CD4-positive, alpha-beta memory T cell (primary cell): ENCODE measurements at regions of chr6 and their contacts with region 1.

Region 1: GRCh38 chr6:109095027-109095834 is at the start of gene CEP57L1:
- DNase-seq: peak; percentile 94 to 97 (median 95)
- H3K4me3 ChIP-seq: peak within 1 kb of the TSS; percentile 74 to 80
- H3K4me3 Mint-ChIP-seq: peak within 1 kb of the TSS; percentile 90 to 97 (median 95)
- H3K27ac ChIP-seq: peak within 1 kb of the TSS; percentile 97
- H3K27ac Mint-ChIP-seq: peak within 1 kb of the TSS; percentile 97 to 100 (median 99)
- H3K4me1 ChIP-seq: peaks cover 44% of the 10 kb centered on the region
- H3K4me1 Mint-ChIP-seq: peaks cover 36 to 60% (median 44%) of the 10 kb centered on the region in 4 donors
- H3K27me3 ChIP-seq: no peaks in the 10 kb centered on the region
- H3K27me3 Mint-ChIP-seq: no peaks in the 10 kb centered on the region
- total RNA-seq, gene CEP57L1: 5.7 to 9.2 TPM

Region 2: GRCh38 chr6:108113557-108114519 is 981.4 kb before region 1 on chr6:
- CTCF ChIA-PET with region 1: no interaction called
- POLR2A ChIA-PET with region 1: no interaction called
- intact Hi-C with region 1: loop called (anchors 10 kb)
- DNase-seq: peak in 2 of 5 donors; percentile 18 to 28
- H3K4me3 ChIP-seq: peak overlapping the region in 1 of 2 donors; percentile 1
- H3K4me3 Mint-ChIP-seq: peak overlapping the region in 7 of 8 donors; percentile 57 to 95 (median 64)
- H3K27ac ChIP-seq: no peak overlapping the region
- H3K27ac Mint-ChIP-seq: no peak overlapping the region
- H3K4me1 ChIP-seq: peaks cover 48% of the 10 kb centered on the region
- H3K4me1 Mint-ChIP-seq: peaks cover 32 to 48% (median 40%) of the 10 kb centered on the region in 4 donors
- H3K27me3 ChIP-seq: peaks cover 62% of the 10 kb centered on the region
- H3K27me3 Mint-ChIP-seq: peaks cover 63 to 67% of the 10 kb centered on the region in 2 donors

Region 3: GRCh38 chr6:109009236-109009961 is 85.8 kb before region 1 on chr6:
- CTCF ChIA-PET with region 1: interaction called, 3 read pairs
- POLR2A ChIA-PET with region 1: interaction called, 23 read pairs
- intact Hi-C with region 1: loop called (anchors 1 kb)
- DNase-seq: peak; percentile 90 to 92 (median 90)
- H3K4me3 ChIP-seq: peak overlapping the region; percentile 77 to 86
- H3K4me3 Mint-ChIP-seq: peak overlapping the region; percentile 94 to 100 (median 98)
- H3K27ac ChIP-seq: peak overlapping the region; percentile 96
- H3K27ac Mint-ChIP-seq: peak overlapping the region; percentile 94 to 100 (median 100)
- H3K4me1 ChIP-seq: peaks cover 67% of the 10 kb centered on the region
- H3K4me1 Mint-ChIP-seq: peaks cover 47 to 81% (median 60%) of the 10 kb centered on the region in 4 donors
- H3K27me3 ChIP-seq: no peaks in the 10 kb centered on the region
- H3K27me3 Mint-ChIP-seq: no peaks in the 10 kb centered on the region

Region 4: DNA sequence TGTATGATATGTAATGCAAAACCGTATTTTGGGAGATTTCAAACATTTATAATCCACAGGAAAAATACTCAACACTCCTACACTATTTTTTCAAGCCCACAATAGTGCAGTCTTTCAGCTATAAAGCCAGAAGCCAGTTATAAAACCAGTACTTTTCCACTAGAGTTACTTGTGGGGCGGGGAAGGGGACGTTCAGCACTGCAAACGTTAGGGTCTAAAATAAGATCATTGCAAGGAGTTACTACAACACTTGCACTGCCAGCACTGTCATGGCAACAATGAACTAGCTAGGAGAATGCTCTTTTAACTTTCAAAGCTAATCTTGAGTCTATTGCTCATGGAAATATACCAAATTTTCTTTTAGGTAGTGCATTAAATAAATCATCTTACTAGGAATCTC is 15.2 kb before region 1 on chr6:
- CTCF ChIA-PET with region 1: interaction called, 10 read pairs
- POLR2A ChIA-PET with region 1: interaction called, 17 read pairs
- intact Hi-C with region 1: no loop called
- DNase-seq: no peak
- H3K4me3 ChIP-seq: no peak overlapping the region
- H3K4me3 Mint-ChIP-seq: no peak overlapping the region
- H3K27ac ChIP-seq: no peak overlapping the region
- H3K27ac Mint-ChIP-seq: no peak overlapping the region
- H3K4me1 ChIP-seq: peaks cover 6% of the 10 kb centered on the region
- H3K4me1 Mint-ChIP-seq: peaks cover 0 to 8% (median 5%) of the 10 kb centered on the region in 4 donors
- H3K27me3 ChIP-seq: no peaks in the 10 kb centered on the region
- H3K27me3 Mint-ChIP-seq: no peaks in the 10 kb centered on the region

Region 5: DNA sequence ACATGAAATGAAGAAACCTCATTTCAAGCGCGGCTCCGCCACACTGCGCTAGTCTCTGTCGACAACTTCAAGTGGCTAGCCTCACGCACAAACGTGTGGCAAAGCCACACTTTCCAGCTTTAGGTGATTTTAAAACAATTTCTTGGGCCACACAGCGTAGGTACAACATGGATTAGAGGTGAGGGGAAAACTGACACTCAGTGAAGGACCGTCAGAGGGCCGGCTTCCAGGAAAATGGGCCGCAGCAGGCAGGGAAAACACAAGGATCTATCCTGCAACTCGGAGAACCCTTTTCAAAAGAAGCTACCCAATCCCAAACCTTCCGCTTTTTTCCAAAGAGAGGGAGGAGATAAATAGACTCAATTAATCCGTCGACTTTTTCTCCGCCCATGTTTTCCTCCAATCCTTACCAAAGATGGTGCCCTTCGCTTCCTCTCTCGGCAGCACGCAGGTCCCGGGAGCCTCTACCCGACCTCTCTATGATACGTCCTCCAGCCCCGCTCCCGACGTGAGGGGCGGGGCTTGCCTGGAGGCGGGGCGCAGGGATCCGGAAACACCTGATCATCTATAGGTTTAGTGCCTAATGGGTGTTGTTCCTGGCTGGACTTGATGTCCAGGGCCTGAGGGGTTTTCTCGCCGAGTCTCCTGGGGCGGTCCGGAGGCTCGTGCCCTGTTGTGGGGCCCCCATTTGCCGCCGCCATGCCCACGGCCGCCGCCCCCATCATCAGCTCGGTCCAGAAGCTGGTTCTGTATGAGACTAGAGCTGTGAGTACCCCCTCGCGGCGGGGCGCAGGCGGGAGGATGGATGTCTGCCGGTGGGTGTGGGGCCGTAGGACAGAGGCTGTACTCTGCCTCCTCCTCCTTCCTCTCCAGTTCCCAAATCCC is 595.7 kb after region 1 on chr6 and contains the starts of genes AK9 and FIG4:
- CTCF ChIA-PET with region 1: no interaction called
- POLR2A ChIA-PET with region 1: interaction called, 3 read pairs
- intact Hi-C with region 1: loop called (anchors 1 kb)
- DNase-seq: peak; percentile 82 to 90 (median 84)
- H3K4me3 ChIP-seq: peak within 1 kb of the TSS; percentile 87 to 89
- H3K4me3 Mint-ChIP-seq: peak within 1 kb of the TSS; percentile 95 to 100 (median 99)
- H3K27ac ChIP-seq: peak within 1 kb of the TSS; percentile 74
- H3K27ac Mint-ChIP-seq: peak within 1 kb of the TSS; percentile 93 to 99 (median 97)
- H3K4me1 ChIP-seq: peaks cover 26% of the 10 kb centered on the region
- H3K4me1 Mint-ChIP-seq: peaks cover 10 to 29% (median 22%) of the 10 kb centered on the region in 4 donors
- H3K27me3 ChIP-seq: no peaks in the 10 kb centered on the region
- H3K27me3 Mint-ChIP-seq: peaks cover 0 to 2% of the 10 kb centered on the region in 2 donors
- total RNA-seq, gene AK9: 15.6 to 18.4 TPM
- total RNA-seq, gene FIG4: 14.4 to 14.8 TPM

Region 6: DNA sequence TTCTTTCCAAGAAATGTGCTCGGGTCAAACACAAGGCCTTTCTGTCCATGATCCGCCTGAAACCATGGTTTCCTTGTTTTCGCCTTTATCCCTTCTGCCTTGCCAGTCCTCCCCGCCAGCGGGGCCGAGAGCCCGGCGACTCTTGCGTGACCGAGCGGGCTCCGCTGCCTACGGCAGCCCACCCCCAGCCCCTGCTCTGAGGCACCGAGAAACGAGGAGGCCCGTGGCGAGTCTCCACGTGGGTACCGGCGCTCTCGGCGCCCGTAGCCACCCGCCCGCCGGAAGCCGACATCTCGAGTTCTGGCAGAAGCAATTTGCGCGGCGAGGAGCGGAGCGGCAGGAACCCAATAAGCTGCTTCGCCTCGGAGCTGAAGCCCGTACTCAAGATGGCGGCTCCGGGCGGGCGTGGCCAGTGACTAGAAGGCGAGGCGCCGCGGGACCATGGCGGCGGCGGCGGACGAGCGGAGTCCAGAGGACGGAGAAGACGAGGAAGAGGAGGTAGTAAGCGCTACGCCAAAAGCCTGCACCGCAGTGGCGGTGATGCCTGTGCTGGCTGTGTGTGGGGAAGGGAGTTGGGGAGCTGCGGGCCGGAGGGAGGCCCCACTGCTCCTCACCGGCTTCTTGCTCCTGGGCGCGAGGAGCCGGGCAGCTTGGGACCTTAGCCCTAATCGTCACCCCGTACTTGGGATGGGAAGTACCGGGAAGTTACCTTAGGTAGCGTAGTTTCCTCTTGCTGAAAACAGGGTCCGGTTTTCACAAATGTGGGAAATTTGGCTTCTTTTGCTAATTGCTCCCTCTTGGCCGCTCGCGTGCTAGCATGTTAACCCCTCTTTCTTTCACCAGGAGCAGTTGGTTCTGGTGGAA is 1863.3 kb after region 1 on chr6 and contains the start of gene GTF3C6:
- CTCF ChIA-PET with region 1: no interaction called
- POLR2A ChIA-PET with region 1: interaction called, 4 read pairs
- intact Hi-C with region 1: loop called (anchors 10 kb)
- DNase-seq: peak; percentile 90 to 94 (median 92)
- H3K4me3 ChIP-seq: peak within 1 kb of the TSS; percentile 69 to 94
- H3K4me3 Mint-ChIP-seq: peak within 1 kb of the TSS; percentile 95 to 99 (median 98)
- H3K27ac ChIP-seq: peak within 1 kb of the TSS; percentile 82
- H3K27ac Mint-ChIP-seq: peak within 1 kb of the TSS; percentile 91 to 99 (median 98)
- H3K4me1 ChIP-seq: peaks cover 20% of the 10 kb centered on the region
- H3K4me1 Mint-ChIP-seq: peaks cover 11 to 26% (median 17%) of the 10 kb centered on the region in 4 donors
- H3K27me3 ChIP-seq: no peaks in the 10 kb centered on the region
- H3K27me3 Mint-ChIP-seq: no peaks in the 10 kb centered on the region
- total RNA-seq, gene GTF3C6: 28.9 to 35.7 TPM